Posterior cingulate gyrus (tissue), 11 donors: ENCODE measurements at regions of chr5 and their contacts with region 1.

Region 1: DNA sequence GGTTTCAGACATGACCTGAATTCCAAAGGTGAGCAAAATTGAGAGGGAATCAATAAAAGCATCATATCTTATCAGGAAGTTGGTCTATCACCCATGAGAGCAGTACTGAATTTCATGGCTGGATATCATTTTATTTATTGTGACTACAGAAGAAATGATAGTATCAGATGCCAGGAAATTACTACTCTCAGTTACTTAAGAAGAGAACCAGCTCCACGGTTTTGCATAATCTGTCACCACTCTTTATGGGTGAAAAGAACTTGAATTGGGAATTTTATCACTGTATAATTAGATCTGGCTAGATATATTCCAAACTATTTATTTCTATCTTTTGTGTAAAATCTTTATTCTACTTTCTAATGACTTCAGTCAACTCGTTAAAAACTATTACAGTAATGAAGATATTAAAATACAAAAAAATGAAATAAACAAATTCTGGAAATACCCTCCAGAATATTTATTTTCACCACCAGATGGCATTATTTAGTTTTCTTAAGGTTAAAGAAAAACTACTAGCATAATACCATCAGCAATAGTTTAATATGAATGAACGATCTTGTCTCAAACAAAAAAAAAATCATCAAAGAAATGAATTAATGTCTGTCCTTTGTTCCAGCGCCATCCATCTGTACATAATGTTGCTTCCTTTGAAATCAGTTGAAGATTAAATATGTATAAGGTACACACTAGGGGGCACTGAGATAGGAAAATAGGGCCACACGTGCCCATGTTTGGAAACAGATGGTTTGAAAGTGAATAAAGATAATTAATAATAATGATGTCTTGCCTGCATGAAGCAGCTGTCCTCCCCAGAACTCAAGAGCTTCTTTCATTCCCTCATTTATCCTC is 84.7 kb upstream of the SLCO6A1 start:
- DNase-seq: no peak

Region 2: DNA sequence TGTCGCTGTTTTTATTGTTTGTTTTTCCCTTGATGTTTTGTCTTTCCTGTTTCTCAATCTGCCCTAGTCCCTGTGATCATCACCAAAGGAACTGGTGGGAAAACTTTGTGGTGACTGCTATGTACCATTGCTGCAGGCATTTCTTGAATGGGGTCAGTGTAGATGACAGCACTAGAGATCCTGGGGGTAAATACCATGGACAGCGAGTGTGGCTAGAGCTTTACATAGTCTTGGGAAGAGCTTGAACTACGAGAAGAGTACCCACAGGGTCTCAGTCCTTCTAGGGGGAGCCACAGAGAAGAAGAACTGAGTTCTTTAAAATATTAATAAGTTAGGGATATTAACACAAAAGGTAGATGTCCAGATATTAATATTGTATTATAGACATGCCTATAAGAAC is 310.4 kb after region 1 on chr5:
- intact Hi-C with region 1: no loop called
- DNase-seq: no peak

Region 3: GRCh38 chr5:102971697-102972293 is 388.3 kb after region 1 on chr5:
- intact Hi-C with region 1: loop called (anchors 5 kb)
- DNase-seq: no peak

Region 4: DNA sequence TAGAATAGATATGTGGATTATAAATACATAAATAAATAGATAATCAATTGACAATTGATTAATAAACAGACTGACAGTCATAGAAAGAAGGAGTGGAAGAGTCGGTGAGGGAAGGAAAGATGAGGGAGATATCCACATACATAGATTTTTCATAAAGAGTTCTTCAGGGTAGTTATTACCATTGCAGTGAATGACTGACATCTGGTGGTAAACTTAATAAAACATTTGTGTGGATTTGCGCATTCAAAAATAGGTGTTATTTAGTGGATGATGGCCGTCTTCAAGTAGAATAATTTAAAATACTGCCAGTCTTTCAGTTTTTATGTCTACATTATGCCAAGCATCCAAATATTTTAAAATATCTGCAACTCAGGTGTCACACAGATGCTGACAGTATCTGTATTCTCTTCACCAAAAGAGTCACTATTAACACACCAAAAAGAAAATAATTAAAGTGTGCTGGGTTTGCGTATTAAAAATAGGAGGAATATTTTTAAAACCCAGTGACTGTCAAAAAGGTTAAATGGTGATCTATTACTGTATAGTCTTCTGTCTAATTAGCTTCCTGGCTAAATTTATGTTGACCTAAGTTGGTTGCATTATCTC is 457.7 kb after region 1 on chr5:
- intact Hi-C with region 1: loop called (anchors 2 kb)
- DNase-seq: no peak

Region 5: DNA sequence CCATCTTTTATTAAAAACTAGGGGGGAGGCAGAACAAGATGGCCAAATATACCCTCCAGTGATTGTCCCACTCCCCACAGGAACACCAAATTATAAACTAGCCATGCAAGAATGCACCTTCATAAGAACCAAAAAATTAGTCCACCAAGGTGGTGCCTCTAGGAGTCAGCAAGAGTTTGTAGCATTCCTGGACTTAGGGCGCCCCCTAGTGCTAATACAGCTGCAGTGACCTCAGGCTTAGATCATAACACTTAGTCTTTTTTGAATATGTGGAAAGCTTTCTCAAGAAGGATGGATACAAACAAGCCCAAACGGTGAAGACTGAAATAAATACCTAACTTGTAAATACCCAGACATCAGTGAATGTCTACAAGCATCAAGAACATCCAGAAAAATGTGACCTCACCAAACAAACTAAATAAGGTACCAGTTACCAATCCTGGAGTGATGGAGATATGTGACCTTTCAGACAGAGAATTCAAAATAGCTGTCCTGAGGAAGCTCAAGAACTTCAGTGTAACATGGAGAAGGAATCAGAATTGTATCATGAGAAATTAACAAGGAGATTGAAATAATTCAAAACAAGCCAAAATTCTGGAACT is 555.9 kb after region 1 on chr5:
- intact Hi-C with region 1: loop called (anchors 2 kb)
- DNase-seq: peak in 9 of 10 donors; percentile 37 to 93 (median 75)